ENCODE measurements at regions of chr20 and their contacts with region 1.

Region 1: GRCh38 chr20:32789896-32790750 is 27.9 kb downstream of the DNMT3B start:
- DNase-seq: peak; percentile 82
- ATAC-seq: peak; percentile 82
- H3K4me3 Mint-ChIP-seq: no peak overlapping the region
- H3K27ac Mint-ChIP-seq: no peak overlapping the region
- H3K4me1 Mint-ChIP-seq: peaks cover 32% of the 10 kb centered on the region
- H3K27me3 Mint-ChIP-seq: no peaks in the 10 kb centered on the region
- CTCF ChIP-seq: peak; percentile 99

Region 2: DNA sequence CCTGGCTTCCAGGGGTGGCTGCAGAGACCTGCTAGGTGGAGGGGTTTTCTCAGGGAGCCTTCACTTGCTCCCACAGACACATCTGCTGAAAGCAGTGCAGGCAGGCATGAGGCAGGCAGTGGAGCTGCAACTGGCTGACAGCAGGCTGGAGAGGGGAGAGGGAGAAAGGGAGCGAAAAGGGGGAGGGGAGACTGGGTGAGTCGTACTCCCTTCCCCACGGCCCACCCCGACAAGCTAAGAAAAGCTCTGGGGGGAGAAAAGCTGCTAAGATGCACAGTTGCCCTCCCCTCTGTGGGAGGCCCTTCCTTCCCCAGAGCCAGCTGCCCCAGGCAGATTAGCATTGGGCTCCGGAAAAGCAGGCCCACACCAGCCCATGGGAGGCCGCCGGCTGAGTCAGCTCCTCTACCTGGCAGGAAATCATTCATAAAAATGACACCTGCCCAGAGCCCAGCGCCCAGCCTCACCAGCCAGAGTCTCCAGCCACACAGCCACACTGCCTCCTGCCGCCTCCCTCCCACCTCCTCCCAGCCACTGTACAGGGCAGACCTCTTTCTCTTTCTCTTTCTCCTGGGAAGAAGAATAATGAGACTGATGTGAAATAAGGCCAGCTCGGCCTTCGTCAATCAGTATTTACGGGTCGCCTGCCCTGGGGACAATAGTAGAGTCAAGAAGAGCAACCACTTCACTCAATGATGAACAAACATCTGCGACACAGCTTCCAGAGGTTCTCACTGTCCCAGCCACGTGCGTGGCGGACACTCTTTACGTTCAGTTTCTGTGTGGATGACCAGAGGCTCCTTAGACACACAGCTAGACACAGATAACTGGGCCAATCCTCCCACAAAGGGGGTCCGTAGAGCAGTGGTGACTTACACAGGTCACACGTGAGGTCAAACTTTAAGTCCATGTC is 108.7 kb before region 1 on chr20:
- CTCF ChIA-PET with region 1: interaction called, 13 read pairs
- POLR2A ChIA-PET with region 1: no interaction called
- intact Hi-C with region 1: no loop called
- DNase-seq: peak; percentile 56
- ATAC-seq: peak; percentile 70
- H3K4me3 Mint-ChIP-seq: no peak overlapping the region
- H3K27ac Mint-ChIP-seq: peak overlapping the region; percentile 44
- H3K4me1 Mint-ChIP-seq: peaks cover 16% of the 10 kb centered on the region
- H3K27me3 Mint-ChIP-seq: no peaks in the 10 kb centered on the region
- CTCF ChIP-seq: no peak

Region 3: GRCh38 chr20:32869562-32869961 is 79.4 kb after region 1 on chr20:
- CTCF ChIA-PET with region 1: no interaction called
- POLR2A ChIA-PET with region 1: no interaction called
- intact Hi-C with region 1: loop called (anchors 5 kb)
- DNase-seq: no peak
- ATAC-seq: no peak
- H3K4me3 Mint-ChIP-seq: no peak overlapping the region
- H3K27ac Mint-ChIP-seq: no peak overlapping the region
- H3K4me1 Mint-ChIP-seq: no peaks in the 10 kb centered on the region
- H3K27me3 Mint-ChIP-seq: no peaks in the 10 kb centered on the region
- CTCF ChIP-seq: no peak

Region 4: DNA sequence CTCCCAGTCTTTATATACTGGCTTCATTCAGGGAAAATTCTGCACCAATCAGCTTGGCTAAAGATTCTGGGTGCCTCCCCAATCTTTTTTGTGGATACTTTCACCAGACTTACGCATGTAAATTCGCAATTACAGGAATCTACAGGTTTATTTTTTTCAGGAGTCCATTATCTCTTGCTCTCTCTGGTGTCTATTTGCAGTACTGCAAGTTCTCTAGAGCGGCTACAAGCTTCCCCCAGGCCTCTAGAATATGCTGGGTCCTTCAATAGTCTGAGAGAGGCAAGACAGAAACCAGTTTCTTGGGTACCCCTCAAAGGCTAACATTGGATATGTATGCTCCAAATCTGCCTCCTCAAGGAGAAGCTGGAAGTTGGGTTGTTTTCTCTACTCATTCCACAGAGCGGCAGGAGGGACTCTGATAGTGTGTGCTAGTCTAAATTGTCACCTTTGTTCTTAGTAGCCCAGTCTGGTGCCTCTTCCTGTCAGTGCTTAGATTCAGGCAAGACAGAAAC is 155.6 kb after region 1 on chr20:
- CTCF ChIA-PET with region 1: interaction called, 10 read pairs
- POLR2A ChIA-PET with region 1: no interaction called
- intact Hi-C with region 1: loop called (anchors 5 kb)
- DNase-seq: peak; percentile 37
- ATAC-seq: peak; percentile 97
- H3K4me3 Mint-ChIP-seq: no peak overlapping the region
- H3K27ac Mint-ChIP-seq: peak overlapping the region; percentile 84
- H3K4me1 Mint-ChIP-seq: peaks cover 28% of the 10 kb centered on the region
- H3K27me3 Mint-ChIP-seq: no peaks in the 10 kb centered on the region
- CTCF ChIP-seq: peak; percentile 80

Measured in activated CD8-positive, alpha-beta T cell treated with anti-CD3 and anti-CD28 coated beads for 36 hours (primary cell).